PC-9 (cell line): ENCODE measurements at regions of chr15 and their contacts with region 1.

Region 1: DNA sequence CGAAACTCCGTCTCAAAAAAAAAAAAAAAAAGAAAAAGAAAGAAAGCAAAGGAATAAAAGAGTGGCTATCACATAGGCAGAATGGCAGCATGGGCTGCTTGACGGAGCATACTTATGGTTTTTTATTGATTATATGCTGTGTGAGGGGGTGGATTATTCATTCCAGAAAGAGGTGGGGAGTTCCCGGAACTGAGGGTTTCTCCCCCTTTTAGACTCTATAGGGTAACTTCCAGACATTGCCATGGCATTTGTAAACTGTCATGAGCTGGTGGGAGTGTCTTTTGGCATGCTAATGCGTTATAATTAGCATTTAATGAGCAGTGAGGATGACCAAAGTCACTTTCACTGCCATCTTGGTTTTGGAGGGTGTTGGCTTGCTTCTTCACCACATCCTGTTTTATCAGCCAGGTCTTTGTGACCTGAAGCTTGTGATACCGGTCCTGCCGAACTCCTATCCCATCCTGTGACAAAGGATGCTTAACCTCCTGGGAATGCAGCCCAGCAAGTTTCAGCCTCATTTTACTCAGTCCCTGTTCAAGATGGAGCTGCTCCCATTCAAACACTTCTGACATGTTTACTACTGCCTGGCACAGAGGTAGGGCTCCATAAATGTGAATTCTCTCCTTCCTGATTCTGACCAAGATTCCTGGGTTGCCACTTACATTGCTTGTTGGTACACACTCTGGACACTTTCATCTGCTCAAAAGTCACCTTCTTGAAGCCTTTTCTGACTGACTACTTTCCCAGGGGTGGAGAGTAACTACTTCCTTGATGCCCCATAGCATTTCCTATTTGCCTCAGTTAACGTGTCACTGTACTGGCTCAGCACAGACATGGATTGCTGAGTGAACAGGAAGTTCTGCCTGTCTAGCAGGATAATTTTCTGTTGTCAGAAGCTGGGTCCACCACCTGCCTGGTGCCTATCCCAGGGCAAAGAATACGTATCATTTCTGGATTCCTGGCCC is 15.7 kb upstream of the ABHD17C start:
- DNase-seq: peak; percentile 80 to 97
- H3K4me3 ChIP-seq: peak overlapping the region; percentile 27; the same call in 1 of the 2 replicates
- H3K27ac ChIP-seq: peak overlapping the region; percentile 90
- H3K4me1 ChIP-seq: peaks cover 67% of the 10 kb centered on the region
- H3K27me3 ChIP-seq: no peaks in the 10 kb centered on the region
- CTCF ChIP-seq: no peak

Region 2: GRCh38 chr15:79853458-79854328 is 825.8 kb before region 1 on chr15:
- CTCF ChIA-PET with region 1: no interaction called
- POLR2A ChIA-PET with region 1: no interaction called
- intact Hi-C with region 1: no loop called
- DNase-seq: peak; percentile 45 to 53
- H3K4me3 ChIP-seq: no peak overlapping the region
- H3K27ac ChIP-seq: no peak overlapping the region
- H3K4me1 ChIP-seq: no peaks in the 10 kb centered on the region
- H3K27me3 ChIP-seq: no peaks in the 10 kb centered on the region
- CTCF ChIP-seq: peak; percentile 83

Region 3: GRCh38 chr15:80660122-80660521 is 19.3 kb before region 1 on chr15:
- CTCF ChIA-PET with region 1: interaction called, 11 read pairs
- POLR2A ChIA-PET with region 1: no interaction called
- intact Hi-C with region 1: no loop called
- DNase-seq: peak in 1 of 2 experiments; percentile 15
- H3K4me3 ChIP-seq: no peak overlapping the region
- H3K27ac ChIP-seq: peak overlapping the region; percentile 43
- H3K4me1 ChIP-seq: peaks cover 40% of the 10 kb centered on the region
- H3K27me3 ChIP-seq: no peaks in the 10 kb centered on the region
- CTCF ChIP-seq: no peak

Region 4: GRCh38 chr15:80727196-80727595 is 47.7 kb after region 1 on chr15:
- CTCF ChIA-PET with region 1: no interaction called
- POLR2A ChIA-PET with region 1: no interaction called
- intact Hi-C with region 1: loop called (anchors 1 kb)
- DNase-seq: peak; percentile 68 to 89
- H3K4me3 ChIP-seq: no peak overlapping the region
- H3K27ac ChIP-seq: peak overlapping the region; percentile 67
- H3K4me1 ChIP-seq: peaks cover 18% of the 10 kb centered on the region
- H3K27me3 ChIP-seq: no peaks in the 10 kb centered on the region
- CTCF ChIP-seq: no peak

Region 5: DNA sequence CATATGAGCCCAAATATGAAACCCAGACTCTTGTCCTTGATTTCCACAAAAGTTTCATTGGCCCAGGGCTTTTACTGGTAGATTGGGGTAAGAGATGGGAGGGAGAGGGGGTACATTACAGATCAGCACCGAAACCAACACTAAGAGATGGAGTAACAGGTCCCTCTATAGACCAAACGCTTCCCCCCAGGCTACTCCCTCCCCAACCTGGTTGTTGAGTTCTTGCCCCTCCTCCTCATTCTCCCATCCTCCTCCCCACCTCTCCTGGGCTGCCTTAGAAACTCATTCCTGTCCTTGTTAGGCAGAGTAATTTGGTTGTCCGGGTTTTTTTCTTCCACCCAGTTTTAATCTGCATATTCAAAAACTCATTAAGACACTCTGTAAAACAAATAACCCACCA is 236.0 kb after region 1 on chr15:
- CTCF ChIA-PET with region 1: no interaction called
- POLR2A ChIA-PET with region 1: no interaction called
- intact Hi-C with region 1: no loop called
- DNase-seq: no peak
- H3K4me3 ChIP-seq: no peak overlapping the region
- H3K27ac ChIP-seq: peak overlapping the region; percentile 67; the same call in 1 of the 2 replicates
- H3K4me1 ChIP-seq: peaks cover 17% of the 10 kb centered on the region
- H3K27me3 ChIP-seq: no peaks in the 10 kb centered on the region
- CTCF ChIP-seq: no peak

Region 6: DNA sequence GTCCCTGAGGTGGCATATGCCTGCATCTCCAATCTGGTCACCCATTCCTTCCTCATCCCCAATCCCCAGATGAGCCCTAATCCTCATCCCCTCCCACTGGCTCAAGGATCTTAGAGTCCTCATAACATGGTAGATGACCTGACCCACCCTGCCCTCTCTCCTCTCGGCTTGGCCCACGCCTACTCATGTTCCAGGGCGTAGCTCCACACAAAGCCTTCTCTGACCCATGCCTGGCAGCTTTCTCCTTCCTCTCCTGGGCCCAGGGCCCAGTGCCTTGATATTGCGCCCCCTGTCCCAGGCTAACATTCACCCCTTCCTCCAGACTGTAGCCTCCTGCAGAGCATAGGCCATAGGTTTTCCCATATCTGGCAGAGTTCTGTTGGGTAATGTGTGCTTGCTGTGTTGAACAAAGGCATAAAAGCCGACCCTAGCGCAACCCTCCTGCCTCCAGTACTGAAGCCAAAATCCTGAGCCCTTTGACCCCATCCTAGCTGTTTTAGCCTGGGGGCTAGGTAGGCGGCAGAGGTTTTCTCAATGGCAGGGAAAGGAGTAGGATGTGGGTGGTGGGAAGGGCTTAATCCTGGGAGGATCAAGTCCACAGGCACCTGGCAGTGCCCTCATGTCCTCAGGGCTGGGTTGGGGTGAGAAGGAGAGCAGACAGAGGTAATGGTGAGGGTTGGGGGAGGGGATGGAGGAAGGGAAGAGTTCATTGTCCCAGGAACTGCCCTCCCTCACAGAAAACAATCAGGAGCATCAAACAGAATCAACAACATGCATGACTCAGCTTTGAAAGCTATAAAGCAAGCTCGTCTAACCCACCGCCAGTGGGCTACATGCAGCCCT is 274.7 kb after region 1 on chr15:
- CTCF ChIA-PET with region 1: no interaction called
- POLR2A ChIA-PET with region 1: no interaction called
- intact Hi-C with region 1: loop called (anchors 1 kb)
- DNase-seq: peak; percentile 66 to 77
- H3K4me3 ChIP-seq: no peak overlapping the region
- H3K27ac ChIP-seq: peak overlapping the region; percentile 82
- H3K4me1 ChIP-seq: peaks cover 49% of the 10 kb centered on the region
- H3K27me3 ChIP-seq: no peaks in the 10 kb centered on the region
- CTCF ChIP-seq: no peak